B cell (primary cell): ENCODE measurements at regions of chr6 and their contacts with region 1.

Region 1: GRCh38 chr6:135438907-135439535 is 58.5 kb downstream of the AHI1 start:
- DNase-seq: peak; percentile 49
- ATAC-seq: peak; percentile 41
- H3K4me3 ChIP-seq: no peak overlapping the region
- H3K4me3 Mint-ChIP-seq: no peak overlapping the region
- H3K27ac ChIP-seq: no peak overlapping the region
- H3K27ac Mint-ChIP-seq: no peak overlapping the region
- H3K4me1 ChIP-seq: peaks cover 6 to 12% of the 10 kb centered on the region in 2 donors
- H3K4me1 Mint-ChIP-seq: peaks cover 25% of the 10 kb centered on the region
- H3K27me3 ChIP-seq: no peaks in the 10 kb centered on the region
- H3K27me3 Mint-ChIP-seq: no peaks in the 10 kb centered on the region
- CTCF ChIP-seq: peak; percentile 67

Region 2: GRCh38 chr6:135383770-135384169 is 55.3 kb before region 1 on chr6:
- CTCF ChIA-PET with region 1: no interaction called
- POLR2A ChIA-PET with region 1: no interaction called
- intact Hi-C with region 1: no loop called
- DNase-seq: no peak
- ATAC-seq: no peak
- H3K4me3 ChIP-seq: no peak overlapping the region
- H3K4me3 Mint-ChIP-seq: no peak overlapping the region
- H3K27ac ChIP-seq: no peak overlapping the region
- H3K27ac Mint-ChIP-seq: no peak overlapping the region
- H3K4me1 ChIP-seq: no peaks in the 10 kb centered on the region
- H3K4me1 Mint-ChIP-seq: no peaks in the 10 kb centered on the region
- H3K27me3 ChIP-seq: no peaks in the 10 kb centered on the region
- H3K27me3 Mint-ChIP-seq: no peaks in the 10 kb centered on the region
- CTCF ChIP-seq: no peak

Region 3: GRCh38 chr6:135423649-135424128 is 15.3 kb before region 1 on chr6:
- CTCF ChIA-PET with region 1: interaction called, 11 read pairs
- POLR2A ChIA-PET with region 1: no interaction called
- intact Hi-C with region 1: no loop called
- DNase-seq: peak; percentile 55
- ATAC-seq: peak; percentile 62
- H3K4me3 ChIP-seq: no peak overlapping the region
- H3K4me3 Mint-ChIP-seq: no peak overlapping the region
- H3K27ac ChIP-seq: no peak overlapping the region
- H3K27ac Mint-ChIP-seq: no peak overlapping the region
- H3K4me1 ChIP-seq: no peaks in the 10 kb centered on the region
- H3K4me1 Mint-ChIP-seq: no peaks in the 10 kb centered on the region
- H3K27me3 ChIP-seq: no peaks in the 10 kb centered on the region
- H3K27me3 Mint-ChIP-seq: no peaks in the 10 kb centered on the region
- CTCF ChIP-seq: peak; percentile 81

Region 4: DNA sequence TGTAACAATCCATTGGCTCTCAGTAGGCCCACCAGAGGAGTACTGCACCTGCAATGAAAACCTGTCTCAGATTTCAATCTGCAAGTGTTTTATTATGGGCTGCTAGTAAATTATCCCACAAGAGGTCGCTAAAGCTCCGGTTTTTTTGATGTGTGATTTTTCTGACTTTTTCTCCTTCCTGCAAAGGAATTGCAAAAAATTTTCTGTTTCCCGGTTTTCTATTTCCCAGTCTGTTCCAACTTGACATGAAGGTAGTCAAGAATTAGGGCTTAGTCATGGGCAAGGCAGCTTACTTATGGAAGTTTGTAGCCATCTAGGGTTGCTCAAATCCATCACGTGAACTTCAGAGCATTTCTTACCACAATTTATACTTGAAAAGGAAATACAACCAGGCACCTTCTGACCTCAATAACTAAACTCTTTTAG is 97.0 kb after region 1 on chr6:
- CTCF ChIA-PET with region 1: no interaction called
- POLR2A ChIA-PET with region 1: no interaction called
- intact Hi-C with region 1: no loop called
- DNase-seq: peak; percentile 42
- ATAC-seq: no peak
- H3K4me3 ChIP-seq: no peak overlapping the region
- H3K4me3 Mint-ChIP-seq: no peak overlapping the region
- H3K27ac ChIP-seq: no peak overlapping the region
- H3K27ac Mint-ChIP-seq: no peak overlapping the region
- H3K4me1 ChIP-seq: no peaks in the 10 kb centered on the region
- H3K4me1 Mint-ChIP-seq: peaks cover 8% of the 10 kb centered on the region
- H3K27me3 ChIP-seq: no peaks in the 10 kb centered on the region
- H3K27me3 Mint-ChIP-seq: peaks cover 10% of the 10 kb centered on the region
- CTCF ChIP-seq: peak; percentile 74